MCF 10A (cell line): ENCODE measurements at regions of chr1 and their contacts with region 1.

Region 1: DNA sequence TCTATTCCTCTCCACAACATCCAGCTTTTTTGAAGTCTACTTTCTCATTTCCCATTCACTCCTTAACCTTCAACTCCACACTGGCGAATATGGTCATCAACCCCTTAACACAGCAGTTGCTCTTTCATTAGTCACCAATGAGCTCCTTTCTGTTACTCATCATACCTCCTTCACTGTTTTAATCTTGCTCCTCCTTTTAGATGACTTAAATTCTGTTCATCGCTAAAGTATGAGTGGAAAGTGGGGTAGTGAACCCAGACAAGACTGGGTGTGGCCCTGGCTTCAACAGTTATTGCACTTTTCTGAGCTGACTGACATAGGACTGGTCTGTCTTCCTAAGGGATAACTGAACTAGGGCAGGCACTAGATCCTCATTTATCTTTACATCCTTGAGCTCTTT is 51.3 kb downstream of the AKT3 start:
- DNase-seq: peak; percentile 86
- H3K4me3 Mint-ChIP-seq: no peak overlapping the region
- H3K27ac Mint-ChIP-seq: peak overlapping the region; percentile 0
- H3K4me1 Mint-ChIP-seq: peaks cover 24% of the 10 kb centered on the region
- H3K27me3 Mint-ChIP-seq: no peaks in the 10 kb centered on the region
- CTCF ChIP-seq: no peak

Region 2: GRCh38 chr1:243784511-243784910 is 14.2 kb before region 1 on chr1:
- CTCF ChIA-PET with region 1: interaction called, 8 read pairs
- POLR2A ChIA-PET with region 1: interaction called, 11 read pairs
- intact Hi-C with region 1: no loop called
- DNase-seq: no peak
- H3K4me3 Mint-ChIP-seq: no peak overlapping the region
- H3K27ac Mint-ChIP-seq: no peak overlapping the region
- H3K4me1 Mint-ChIP-seq: no peaks in the 10 kb centered on the region
- H3K27me3 Mint-ChIP-seq: no peaks in the 10 kb centered on the region
- CTCF ChIP-seq: no peak